ENCODE measurements at regions of chr16 and their contacts with region 1.

Region 1: DNA sequence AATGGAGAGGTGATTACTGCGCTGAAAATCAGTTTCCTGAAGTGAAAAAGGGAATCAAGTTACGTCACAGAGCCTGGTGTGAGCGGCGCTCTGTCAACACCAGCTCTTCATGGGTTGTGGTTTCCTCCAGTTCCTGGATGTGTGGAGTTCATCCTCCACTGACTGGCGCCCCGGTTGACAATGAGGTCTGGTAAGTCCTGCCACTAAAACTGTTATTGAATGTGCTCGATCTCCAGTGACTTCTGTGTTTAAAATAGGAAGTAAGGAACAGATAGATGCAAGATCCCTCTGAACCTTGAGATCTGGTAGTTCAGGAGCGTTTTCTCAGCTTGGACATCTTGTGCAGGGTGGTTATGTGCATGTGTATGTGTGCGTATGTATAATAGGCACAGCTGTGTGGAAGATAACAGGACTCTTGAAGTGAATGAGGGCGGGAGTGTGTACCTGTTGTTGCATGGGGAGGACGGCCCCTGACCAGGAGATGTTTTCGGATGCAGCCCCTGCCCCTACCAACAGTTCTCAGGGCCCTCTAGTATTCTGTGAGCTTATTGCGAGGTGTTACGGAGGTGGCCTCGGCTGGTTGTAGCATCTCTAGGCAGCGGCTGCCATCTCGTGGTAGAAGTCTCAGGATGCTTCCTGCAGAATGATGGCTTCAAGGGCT is 22.0 kb upstream of the GOT2 start:
- DNase-seq: peak; percentile 92
- H3K4me3 Mint-ChIP-seq: peak overlapping the region; percentile 10
- H3K27ac Mint-ChIP-seq: peak overlapping the region; percentile 11
- H3K4me1 Mint-ChIP-seq: peaks cover 8% of the 10 kb centered on the region
- H3K27me3 Mint-ChIP-seq: no peaks in the 10 kb centered on the region

Region 2: GRCh38 chr16:58392215-58393137 is 363.6 kb before region 1 on chr16 and contains the start of gene GINS3:
- CTCF ChIA-PET with region 1: no interaction called
- intact Hi-C with region 1: loop called (anchors 1 kb)
- DNase-seq: peak; percentile 94
- H3K4me3 Mint-ChIP-seq: peak within 1 kb of the TSS; percentile 98
- H3K27ac Mint-ChIP-seq: peak within 1 kb of the TSS; percentile 99
- H3K4me1 Mint-ChIP-seq: peaks cover 16% of the 10 kb centered on the region
- H3K27me3 Mint-ChIP-seq: no peaks in the 10 kb centered on the region
- total RNA-seq, gene GINS3: 19.2 to 20.3 TPM

Region 3: GRCh38 chr16:58494981-58495520 is 261.1 kb before region 1 on chr16:
- CTCF ChIA-PET with region 1: interaction called, 7 read pairs
- intact Hi-C with region 1: loop called (anchors 1 kb)
- DNase-seq: peak; percentile 94
- H3K4me3 Mint-ChIP-seq: no peak overlapping the region
- H3K27ac Mint-ChIP-seq: no peak overlapping the region
- H3K4me1 Mint-ChIP-seq: peaks cover 9% of the 10 kb centered on the region
- H3K27me3 Mint-ChIP-seq: no peaks in the 10 kb centered on the region

Region 4: DNA sequence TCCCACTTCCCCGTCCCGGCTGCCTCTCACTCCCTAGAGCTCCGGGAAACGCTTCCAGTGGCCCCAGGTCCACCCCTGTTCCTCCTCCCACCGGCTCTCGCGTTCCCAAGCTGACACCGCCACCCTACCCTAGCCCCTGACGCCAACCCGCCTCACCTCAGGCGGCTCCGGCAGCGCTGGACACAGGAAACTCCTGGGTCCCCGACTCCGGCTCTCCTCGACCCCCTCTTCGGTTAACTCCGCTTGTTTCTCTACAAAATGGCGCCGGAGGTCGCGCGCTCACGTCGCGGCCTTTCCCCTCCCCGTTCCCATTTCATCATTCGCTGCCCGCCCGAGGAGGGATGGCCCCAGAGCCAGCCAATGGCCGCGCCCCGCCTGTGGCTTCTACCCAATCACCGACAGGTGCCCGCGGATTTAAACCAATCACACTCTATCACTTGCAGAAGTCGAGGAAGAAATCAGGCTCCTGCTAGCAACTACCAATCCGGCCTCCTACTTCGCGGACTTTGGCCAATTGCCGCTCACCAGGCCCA is 126.5 kb before region 1 on chr16 and contains the start of gene CNOT1:
- CTCF ChIA-PET with region 1: interaction called, 10 read pairs
- intact Hi-C with region 1: loop called (anchors 1 kb)
- DNase-seq: peak; percentile 99
- H3K4me3 Mint-ChIP-seq: peak within 1 kb of the TSS; percentile 99
- H3K27ac Mint-ChIP-seq: peak within 1 kb of the TSS; percentile 100
- H3K4me1 Mint-ChIP-seq: peaks cover 25% of the 10 kb centered on the region
- H3K27me3 Mint-ChIP-seq: peaks cover 1% of the 10 kb centered on the region
- total RNA-seq, gene CNOT1: 283 to 287 TPM

Region 5: GRCh38 chr16:58684354-58685083 is 71.6 kb before region 1 on chr16 and contains the start of gene SLC38A7:
- CTCF ChIA-PET with region 1: interaction called, 15 read pairs
- intact Hi-C with region 1: no loop called
- DNase-seq: peak; percentile 78
- H3K4me3 Mint-ChIP-seq: peak within 1 kb of the TSS; percentile 89
- H3K27ac Mint-ChIP-seq: peak within 1 kb of the TSS; percentile 8
- H3K4me1 Mint-ChIP-seq: peaks cover 15% of the 10 kb centered on the region
- H3K27me3 Mint-ChIP-seq: no peaks in the 10 kb centered on the region
- total RNA-seq, gene SLC38A7: 4.3 to 4.6 TPM

Region 6: DNA sequence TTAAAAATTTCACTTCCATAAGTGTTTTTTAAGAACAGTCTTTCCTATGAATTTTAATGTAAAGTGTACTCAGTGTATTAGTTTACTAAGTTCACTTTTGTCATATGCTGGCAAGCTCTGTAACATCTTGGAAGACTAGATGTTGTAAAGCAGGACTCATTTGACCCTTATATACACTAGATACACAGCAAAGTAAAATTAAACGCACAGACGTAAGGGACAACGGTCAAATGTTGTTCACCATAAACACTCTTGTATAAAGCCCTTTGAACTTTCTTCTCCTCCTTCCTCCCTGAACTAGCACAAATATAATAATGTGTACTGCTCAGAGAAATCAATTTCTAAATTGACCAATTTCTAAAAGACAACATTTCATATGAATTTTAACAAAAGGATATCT is 15.0 kb before region 1 on chr16:
- CTCF ChIA-PET with region 1: interaction called, 16 read pairs
- intact Hi-C with region 1: no loop called
- DNase-seq: no peak
- H3K4me3 Mint-ChIP-seq: no peak overlapping the region
- H3K27ac Mint-ChIP-seq: no peak overlapping the region
- H3K4me1 Mint-ChIP-seq: no peaks in the 10 kb centered on the region
- H3K27me3 Mint-ChIP-seq: peaks cover 3% of the 10 kb centered on the region

Region 7: GRCh38 chr16:58862334-58863021 is 106.4 kb after region 1 on chr16:
- CTCF ChIA-PET with region 1: no interaction called
- intact Hi-C with region 1: no loop called
- DNase-seq: no peak
- H3K4me3 Mint-ChIP-seq: no peak overlapping the region
- H3K27ac Mint-ChIP-seq: no peak overlapping the region
- H3K4me1 Mint-ChIP-seq: no peaks in the 10 kb centered on the region
- H3K27me3 Mint-ChIP-seq: no peaks in the 10 kb centered on the region

Measured in activated naive CD4-positive, alpha-beta T cell treated with anti-CD3 and anti-CD28 coated beads for 36 hours (primary cell).